Activated B cell treated with CpG ODN at 0.5 μM for 24 hours (primary cell): ENCODE measurements at regions of chr22 and their contacts with region 1.

Region 1: DNA sequence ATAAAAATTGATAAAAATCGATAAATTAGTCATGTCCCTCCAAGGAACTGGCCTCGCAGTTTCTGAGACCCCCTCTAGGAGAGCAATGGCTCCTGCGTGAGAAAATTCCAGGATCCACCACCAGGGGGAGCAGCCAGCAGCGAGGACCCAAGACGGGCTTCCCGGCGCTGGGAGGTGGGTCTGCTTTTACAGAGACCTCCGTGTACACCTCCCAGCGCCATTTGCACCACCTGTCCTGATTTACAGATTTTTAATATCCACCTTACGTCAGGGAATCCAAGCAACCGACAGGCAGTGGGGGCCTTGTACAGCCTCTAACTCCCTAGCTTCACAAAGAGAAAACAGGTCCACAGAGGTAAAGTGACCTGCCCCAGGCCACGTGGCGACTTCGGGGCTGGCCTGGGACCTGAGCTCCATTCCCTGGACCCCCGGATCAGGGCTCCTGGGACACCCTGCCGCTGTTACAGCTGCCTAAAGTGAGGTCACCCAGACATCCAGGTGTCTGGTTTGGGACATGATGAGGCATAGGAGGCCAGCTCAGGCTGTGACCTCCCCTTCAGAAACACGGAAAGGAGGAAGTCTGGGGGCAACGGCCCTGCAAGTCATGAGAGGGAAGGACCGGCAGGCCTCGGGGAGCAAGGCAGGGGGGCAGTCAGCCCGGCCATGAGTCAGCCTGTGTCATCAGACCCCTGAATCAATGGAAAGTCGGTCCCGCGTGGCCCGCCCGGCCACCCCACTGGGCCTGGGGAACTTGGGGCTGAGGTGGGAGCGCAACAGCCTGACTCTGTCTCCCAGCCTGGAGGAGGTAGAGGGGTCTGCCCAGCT is 3.5 kb downstream of the OSM start:
- DNase-seq: peak; percentile 72
- ATAC-seq: peak; percentile 13
- H3K4me3 Mint-ChIP-seq: peak overlapping the region; percentile 59
- H3K27ac Mint-ChIP-seq: peak overlapping the region; percentile 18
- H3K4me1 Mint-ChIP-seq: peaks cover 27% of the 10 kb centered on the region
- H3K27me3 Mint-ChIP-seq: no peaks in the 10 kb centered on the region
- CTCF ChIP-seq: peak; percentile 97

Region 2: DNA sequence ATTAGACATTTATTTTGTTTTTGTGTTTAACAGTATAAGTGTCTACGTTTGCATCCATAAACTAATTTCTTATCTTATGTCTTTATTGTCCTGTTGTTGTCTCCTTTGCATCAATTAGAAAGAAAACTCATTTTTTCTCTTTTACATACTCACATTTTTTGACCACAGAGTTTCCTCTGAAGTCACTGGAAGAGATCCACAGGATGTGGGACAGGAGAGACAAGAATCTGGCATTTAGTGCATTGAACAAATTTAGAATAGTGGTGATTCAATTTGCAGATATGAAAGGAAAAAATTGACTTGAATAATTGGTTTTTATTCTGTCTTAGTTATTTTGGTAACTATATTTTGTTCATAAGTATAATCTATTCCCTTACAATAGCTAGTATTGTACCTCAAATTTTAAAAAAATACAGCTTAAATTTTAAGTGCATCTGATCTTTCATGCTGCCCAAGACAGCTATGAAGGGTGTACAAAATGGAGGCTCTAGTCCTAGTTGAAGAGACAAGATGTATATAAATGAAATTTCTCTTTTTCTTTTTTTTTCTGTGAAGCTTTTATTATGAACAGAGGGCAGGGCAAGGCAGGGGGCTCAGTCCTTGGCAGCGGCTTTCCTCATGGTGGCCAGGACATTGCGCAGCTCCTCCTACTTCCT is 158.5 kb before region 1 on chr22:
- CTCF ChIA-PET with region 1: interaction called, 4 read pairs
- POLR2A ChIA-PET with region 1: no interaction called
- intact Hi-C with region 1: loop called (anchors 2 kb)
- DNase-seq: no peak
- ATAC-seq: no peak
- H3K4me3 Mint-ChIP-seq: no peak overlapping the region
- H3K27ac Mint-ChIP-seq: no peak overlapping the region
- H3K4me1 Mint-ChIP-seq: peaks cover 6% of the 10 kb centered on the region
- H3K27me3 Mint-ChIP-seq: peaks cover 7% of the 10 kb centered on the region
- CTCF ChIP-seq: no peak

Region 3: GRCh38 chr22:30356449-30357235 is 93.5 kb after region 1 on chr22 and contains the starts of genes CCDC157 and SF3A1:
- CTCF ChIA-PET with region 1: no interaction called
- POLR2A ChIA-PET with region 1: interaction called, 10 read pairs
- intact Hi-C with region 1: loop called (anchors 1 kb)
- DNase-seq: peak; percentile 88
- ATAC-seq: peak; percentile 86
- H3K4me3 Mint-ChIP-seq: peak within 1 kb of the TSS; percentile 92
- H3K27ac Mint-ChIP-seq: peak within 1 kb of the TSS; percentile 76
- H3K4me1 Mint-ChIP-seq: peaks cover 43% of the 10 kb centered on the region
- H3K27me3 Mint-ChIP-seq: no peaks in the 10 kb centered on the region
- CTCF ChIP-seq: no peak
- total RNA-seq, gene CCDC157: 1.8 and 2.9 TPM in 2 replicates
- total RNA-seq, gene SF3A1: 263 and 269 TPM in 2 replicates

Region 4: GRCh38 chr22:31530823-31531195 is 1267.7 kb after region 1 on chr22:
- CTCF ChIA-PET with region 1: no interaction called
- POLR2A ChIA-PET with region 1: no interaction called
- intact Hi-C with region 1: no loop called
- DNase-seq: no peak
- ATAC-seq: no peak
- H3K4me3 Mint-ChIP-seq: no peak overlapping the region
- H3K27ac Mint-ChIP-seq: no peak overlapping the region
- H3K4me1 Mint-ChIP-seq: peaks cover 11% of the 10 kb centered on the region
- H3K27me3 Mint-ChIP-seq: no peaks in the 10 kb centered on the region
- CTCF ChIP-seq: no peak